ENCODE measurements at regions of chr5 and their contacts with region 1.

Region 1: GRCh38 chr5:127875235-127876021 is 172.2 kb downstream of the CCDC192 start:
- DNase-seq: no peak
- H3K4me3 ChIP-seq: no peak overlapping the region
- H3K27me3 ChIP-seq: no peaks in the 10 kb centered on the region
- CTCF ChIP-seq: peak; percentile 20; the same call in 1 of the 2 replicates

Region 2: GRCh38 chr5:127101291-127101932 is 774.0 kb before region 1 on chr5:
- CTCF ChIA-PET with region 1: no interaction called
- POLR2A ChIA-PET with region 1: no interaction called
- DNase-seq: no peak
- H3K4me3 ChIP-seq: no peak overlapping the region
- H3K27me3 ChIP-seq: 0 out of 2 replicates have a peak, but pooled peaks cover 1% of the 10 kb centered on the region
- CTCF ChIP-seq: no peak

Region 3: DNA sequence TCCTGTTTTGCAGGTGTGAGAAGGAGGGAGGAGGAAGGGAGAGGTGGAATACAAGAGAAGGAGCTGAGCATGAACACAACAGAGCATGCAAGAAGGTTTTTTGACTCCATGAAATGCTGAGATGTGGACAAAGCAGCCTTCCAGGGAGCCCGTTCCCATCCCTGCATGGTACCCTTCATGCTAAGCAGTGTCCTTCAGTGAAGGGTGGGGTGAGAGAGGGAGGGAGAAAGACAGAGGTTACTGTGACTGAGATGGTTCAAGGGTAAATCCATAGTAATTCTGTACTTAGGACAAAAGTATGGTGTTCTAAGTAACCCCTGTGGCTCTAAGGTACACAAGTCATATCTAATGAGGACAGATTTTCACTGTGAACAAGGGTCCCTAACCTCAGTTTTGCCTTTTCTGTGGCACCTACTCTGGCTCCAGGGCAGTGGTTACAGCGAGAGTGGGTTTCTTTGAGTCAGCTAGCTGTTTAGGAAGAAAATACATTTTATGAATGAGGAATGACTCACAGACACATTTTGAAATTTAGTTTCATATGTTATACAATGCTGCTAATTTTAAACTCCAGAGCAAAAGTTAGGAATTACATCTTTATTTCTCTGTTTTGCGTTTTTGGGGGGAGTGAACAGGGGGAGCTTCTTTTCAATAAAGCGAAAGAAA is 23.3 kb after region 1 on chr5:
- CTCF ChIA-PET with region 1: interaction called, 14 read pairs
- POLR2A ChIA-PET with region 1: no interaction called
- DNase-seq: no peak
- H3K4me3 ChIP-seq: no peak overlapping the region
- H3K27me3 ChIP-seq: no peaks in the 10 kb centered on the region
- CTCF ChIP-seq: no peak

Measured in BJ (cell line).